ENCODE measurements at regions of chr12 and their contacts with region 1.

Region 1: DNA sequence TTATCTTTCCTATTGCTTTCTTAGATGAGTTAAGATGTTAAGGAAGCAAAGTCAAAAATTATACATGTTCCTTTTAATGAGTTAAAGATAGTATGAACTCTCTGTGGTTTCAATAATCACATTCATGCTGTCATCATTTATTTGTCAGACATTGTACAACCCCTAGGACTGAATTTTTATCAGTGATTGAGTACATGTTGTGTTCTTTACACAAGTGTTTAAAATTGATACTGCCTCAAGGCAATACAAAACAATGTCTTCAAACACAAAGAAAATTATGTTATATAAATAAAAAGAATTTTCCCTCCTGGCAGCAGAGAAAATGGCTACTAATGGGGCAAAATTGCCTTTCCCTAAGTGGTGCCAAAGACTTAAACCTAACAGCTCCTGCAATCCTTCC is 34.6 kb upstream of the KCNJ8 start:
- DNase-seq: no peak
- ATAC-seq: no peak
- H3K4me3 ChIP-seq: no peak overlapping the region
- H3K27ac ChIP-seq: no peak overlapping the region
- H3K4me1 ChIP-seq: no peaks in the 10 kb centered on the region
- H3K27me3 ChIP-seq: no peaks in the 10 kb centered on the region
- CTCF ChIP-seq: no peak

Region 2: GRCh38 chr12:21607701-21608100 is 201.4 kb before region 1 on chr12:
- intact Hi-C with region 1: no loop called
- DNase-seq: no peak
- ATAC-seq: no peak
- H3K4me3 ChIP-seq: no peak overlapping the region
- H3K27ac ChIP-seq: no peak overlapping the region
- H3K4me1 ChIP-seq: no peaks in the 10 kb centered on the region
- H3K27me3 ChIP-seq: no peaks in the 10 kb centered on the region
- CTCF ChIP-seq: peak; percentile 36

Region 3: GRCh38 chr12:21843795-21844194 is 34.7 kb after region 1 on chr12:
- intact Hi-C with region 1: loop called in 1 of 2 experiments (anchors 5 kb)
- DNase-seq: no peak
- ATAC-seq: no peak
- H3K4me3 ChIP-seq: no peak overlapping the region
- H3K27ac ChIP-seq: no peak overlapping the region
- H3K4me1 ChIP-seq: no peaks in the 10 kb centered on the region
- H3K27me3 ChIP-seq: no peaks in the 10 kb centered on the region
- CTCF ChIP-seq: no peak

Region 4: GRCh38 chr12:21865846-21866245 is 56.7 kb after region 1 on chr12:
- intact Hi-C with region 1: no loop called
- DNase-seq: no peak
- ATAC-seq: no peak
- H3K4me3 ChIP-seq: no peak overlapping the region
- H3K27ac ChIP-seq: no peak overlapping the region
- H3K4me1 ChIP-seq: no peaks in the 10 kb centered on the region
- H3K27me3 ChIP-seq: no peaks in the 10 kb centered on the region
- CTCF ChIP-seq: no peak

Measured in psoas muscle (tissue), 8 donors.